ENCODE measurements at regions of chr19 and their contacts with region 1.

Region 1: DNA sequence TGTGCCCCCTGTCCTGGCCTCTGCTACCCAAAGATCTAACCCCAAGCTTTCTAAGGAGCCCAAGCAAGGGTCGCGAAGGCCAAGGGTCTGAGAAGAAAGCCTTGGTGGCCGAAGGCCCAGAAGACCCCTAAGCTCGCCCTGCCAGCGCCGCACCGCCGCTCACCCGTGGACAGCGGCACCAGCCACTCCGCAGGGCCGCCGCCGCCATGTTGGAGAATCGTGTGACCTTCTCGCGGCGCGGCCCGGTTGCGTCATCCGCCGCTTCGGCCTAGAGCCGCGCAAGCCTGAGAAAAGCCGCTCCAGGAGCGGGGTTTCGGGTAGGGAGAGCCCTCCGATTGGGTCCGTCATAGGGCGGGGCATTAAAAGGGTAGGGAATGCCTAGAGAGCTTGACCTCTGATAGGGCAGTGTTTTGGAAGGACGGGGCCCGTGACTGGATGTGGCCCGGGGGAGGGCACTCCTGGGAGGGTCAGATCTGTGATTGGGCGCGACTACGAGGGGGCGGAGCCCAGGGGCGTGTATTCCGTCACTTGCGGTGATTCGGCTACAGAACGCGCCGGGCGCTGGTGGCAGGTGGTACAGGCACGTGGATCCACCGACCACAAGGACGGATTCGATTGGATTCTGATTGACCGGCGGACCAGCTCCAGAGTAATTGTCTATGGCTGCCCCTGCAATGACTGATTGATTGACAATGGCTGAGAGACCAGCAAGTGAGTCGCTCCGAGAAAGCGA is at the start of gene TIMM44:
- DNase-seq: peak; percentile 97
- ATAC-seq: peak; percentile 96
- H3K4me3 Mint-ChIP-seq: peak within 1 kb of the TSS; percentile 91
- H3K27ac Mint-ChIP-seq: peak within 1 kb of the TSS; percentile 97
- H3K4me1 Mint-ChIP-seq: peaks cover 33% of the 10 kb centered on the region
- H3K27me3 Mint-ChIP-seq: no peaks in the 10 kb centered on the region
- CTCF ChIP-seq: no peak
- total RNA-seq, gene TIMM44: 78.4 and 92.5 TPM in 2 replicates

Region 2: DNA sequence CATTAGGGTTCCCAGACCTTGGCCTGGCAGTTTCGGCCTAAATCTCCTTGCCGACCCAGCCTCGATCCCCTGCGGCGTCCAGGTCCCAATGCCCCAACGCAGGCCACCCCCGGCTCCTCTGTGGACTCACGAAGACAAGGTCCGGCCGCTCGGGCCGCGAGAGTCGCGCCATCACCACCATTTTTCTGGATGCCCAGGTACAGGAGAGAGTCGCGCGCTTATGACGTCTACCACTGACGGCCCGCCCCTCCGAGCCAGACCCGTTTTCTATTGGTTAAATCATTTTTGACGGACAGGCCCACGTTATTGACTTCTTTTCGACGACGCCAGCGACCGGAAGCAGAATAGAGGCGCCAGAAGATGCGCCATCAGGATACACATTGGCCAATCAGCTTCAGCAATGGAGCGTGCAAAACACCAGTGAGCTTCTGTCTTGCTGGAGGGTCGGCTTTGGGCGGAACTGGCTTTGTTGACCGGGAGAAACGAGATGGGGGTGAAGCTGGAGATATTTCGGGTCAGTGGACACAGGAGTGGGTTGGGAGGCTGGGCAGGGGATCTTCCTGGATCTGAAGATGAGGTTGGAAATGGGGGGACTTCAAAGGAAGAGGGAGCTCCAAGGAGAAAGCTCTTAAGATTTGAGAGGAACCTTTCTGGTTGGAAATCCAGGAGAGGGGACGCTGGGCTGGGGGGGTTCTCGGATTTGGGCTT is 314.1 kb before region 1 on chr19 and contains the starts of genes PET100 and XAB2:
- CTCF ChIA-PET with region 1: no interaction called
- POLR2A ChIA-PET with region 1: interaction called, 13 read pairs
- intact Hi-C with region 1: loop called (anchors 1 kb)
- DNase-seq: peak; percentile 88
- ATAC-seq: peak; percentile 98
- H3K4me3 Mint-ChIP-seq: peak within 1 kb of the TSS; percentile 98
- H3K27ac Mint-ChIP-seq: peak within 1 kb of the TSS; percentile 98
- H3K4me1 Mint-ChIP-seq: peaks cover 37% of the 10 kb centered on the region
- H3K27me3 Mint-ChIP-seq: no peaks in the 10 kb centered on the region
- CTCF ChIP-seq: no peak
- total RNA-seq, gene PET100: 109 and 123 TPM in 2 replicates
- total RNA-seq, gene XAB2: 47.4 and 51.8 TPM in 2 replicates

Region 3: GRCh38 chr19:7919610-7920518 is 23.7 kb before region 1 on chr19 and contains the start of gene SNAPC2:
- CTCF ChIA-PET with region 1: interaction called, 6 read pairs
- POLR2A ChIA-PET with region 1: interaction called, 49 read pairs
- intact Hi-C with region 1: loop called (anchors 1 kb)
- DNase-seq: peak; percentile 97
- ATAC-seq: peak; percentile 63
- H3K4me3 Mint-ChIP-seq: peak within 1 kb of the TSS; percentile 93
- H3K27ac Mint-ChIP-seq: peak within 1 kb of the TSS; percentile 96
- H3K4me1 Mint-ChIP-seq: peaks cover 49% of the 10 kb centered on the region
- H3K27me3 Mint-ChIP-seq: peaks cover 17% of the 10 kb centered on the region
- CTCF ChIP-seq: no peak
- total RNA-seq, gene SNAPC2: 14.4 and 15.3 TPM in 2 replicates

Region 4: GRCh38 chr19:8005534-8006256 is 62.1 kb after region 1 on chr19 and contains the start of gene ELAVL1:
- CTCF ChIA-PET with region 1: interaction called, 10 read pairs
- POLR2A ChIA-PET with region 1: interaction called, 13 read pairs
- intact Hi-C with region 1: loop called (anchors 1 kb)
- DNase-seq: peak; percentile 92
- ATAC-seq: peak; percentile 94
- H3K4me3 Mint-ChIP-seq: peak within 1 kb of the TSS; percentile 89
- H3K27ac Mint-ChIP-seq: peak within 1 kb of the TSS; percentile 81
- H3K4me1 Mint-ChIP-seq: peaks cover 38% of the 10 kb centered on the region
- H3K27me3 Mint-ChIP-seq: no peaks in the 10 kb centered on the region
- CTCF ChIP-seq: no peak
- total RNA-seq, gene ELAVL1: 83.5 and 87.1 TPM in 2 replicates

Region 5: DNA sequence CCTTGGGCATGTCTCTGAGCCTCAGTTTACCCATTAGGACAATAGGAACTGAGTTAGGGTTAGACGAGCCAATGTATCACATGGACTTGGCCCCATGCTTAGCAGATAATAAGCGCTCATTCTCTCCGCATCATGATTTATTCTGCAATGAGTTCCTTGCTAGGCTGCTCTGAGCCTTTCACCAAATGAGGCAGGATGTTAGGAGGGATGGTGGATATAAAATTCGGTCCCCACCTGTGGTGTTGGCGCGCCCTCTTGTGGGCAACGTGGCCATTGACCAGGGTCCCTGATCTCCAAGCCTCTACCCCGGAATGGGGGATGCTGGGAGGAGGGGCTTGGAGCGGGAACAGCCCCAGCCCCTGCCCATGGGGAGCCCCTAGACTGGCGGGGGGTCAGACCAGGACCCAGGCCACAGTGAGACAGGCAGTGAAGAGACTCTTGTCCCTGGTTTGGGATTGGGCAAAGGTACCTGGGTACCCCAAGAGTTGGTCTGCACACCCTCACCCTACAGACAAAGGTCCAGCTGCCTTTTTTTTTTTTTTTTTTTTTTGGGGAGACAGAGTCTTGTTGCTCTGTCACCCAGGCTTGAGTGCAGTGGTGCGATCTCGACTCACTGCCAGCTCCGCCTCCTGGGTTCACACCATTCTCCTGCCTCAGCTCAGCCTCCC is 309.4 kb after region 1 on chr19:
- CTCF ChIA-PET with region 1: interaction called, 7 read pairs
- POLR2A ChIA-PET with region 1: no interaction called
- intact Hi-C with region 1: loop called (anchors 1 kb)
- DNase-seq: peak; percentile 82
- ATAC-seq: peak; percentile 95
- H3K4me3 Mint-ChIP-seq: no peak overlapping the region
- H3K27ac Mint-ChIP-seq: peak overlapping the region; percentile 71
- H3K4me1 Mint-ChIP-seq: peaks cover 3% of the 10 kb centered on the region
- H3K27me3 Mint-ChIP-seq: no peaks in the 10 kb centered on the region
- CTCF ChIP-seq: peak; percentile 75

Region 6: GRCh38 chr19:8363803-8364771 is 420.5 kb after region 1 on chr19 and contains the start of gene ANGPTL4:
- CTCF ChIA-PET with region 1: no interaction called
- POLR2A ChIA-PET with region 1: no interaction called
- intact Hi-C with region 1: no loop called
- DNase-seq: no peak
- ATAC-seq: peak; percentile 66
- H3K4me3 Mint-ChIP-seq: peak within 1 kb of the TSS; percentile 60
- H3K27ac Mint-ChIP-seq: no peak within 1 kb of the TSS
- H3K4me1 Mint-ChIP-seq: peaks cover 14% of the 10 kb centered on the region
- H3K27me3 Mint-ChIP-seq: peaks cover 43% of the 10 kb centered on the region
- CTCF ChIP-seq: no peak
- total RNA-seq, gene ANGPTL4: not detected in 2 replicates

Region 7: GRCh38 chr19:9453953-9454352 is 1510.3 kb after region 1 on chr19:
- CTCF ChIA-PET with region 1: no interaction called
- POLR2A ChIA-PET with region 1: no interaction called
- intact Hi-C with region 1: no loop called
- DNase-seq: no peak
- ATAC-seq: no peak
- H3K4me3 Mint-ChIP-seq: no peak overlapping the region
- H3K27ac Mint-ChIP-seq: no peak overlapping the region
- H3K4me1 Mint-ChIP-seq: no peaks in the 10 kb centered on the region
- H3K27me3 Mint-ChIP-seq: no peaks in the 10 kb centered on the region
- CTCF ChIP-seq: no peak